Mucosa of descending colon (tissue), 3 donors: ENCODE measurements at regions of chr3 and their contacts with region 1.

Region 1: GRCh38 chr3:32667122-32667521 is 17.9 kb upstream of the CNOT10 start:
- DNase-seq: no peak
- ATAC-seq: peak; percentile 46
- H3K4me3 ChIP-seq: no peak overlapping the region
- H3K4me1 ChIP-seq: no peaks in the 10 kb centered on the region
- CTCF ChIP-seq: no peak

Region 2: DNA sequence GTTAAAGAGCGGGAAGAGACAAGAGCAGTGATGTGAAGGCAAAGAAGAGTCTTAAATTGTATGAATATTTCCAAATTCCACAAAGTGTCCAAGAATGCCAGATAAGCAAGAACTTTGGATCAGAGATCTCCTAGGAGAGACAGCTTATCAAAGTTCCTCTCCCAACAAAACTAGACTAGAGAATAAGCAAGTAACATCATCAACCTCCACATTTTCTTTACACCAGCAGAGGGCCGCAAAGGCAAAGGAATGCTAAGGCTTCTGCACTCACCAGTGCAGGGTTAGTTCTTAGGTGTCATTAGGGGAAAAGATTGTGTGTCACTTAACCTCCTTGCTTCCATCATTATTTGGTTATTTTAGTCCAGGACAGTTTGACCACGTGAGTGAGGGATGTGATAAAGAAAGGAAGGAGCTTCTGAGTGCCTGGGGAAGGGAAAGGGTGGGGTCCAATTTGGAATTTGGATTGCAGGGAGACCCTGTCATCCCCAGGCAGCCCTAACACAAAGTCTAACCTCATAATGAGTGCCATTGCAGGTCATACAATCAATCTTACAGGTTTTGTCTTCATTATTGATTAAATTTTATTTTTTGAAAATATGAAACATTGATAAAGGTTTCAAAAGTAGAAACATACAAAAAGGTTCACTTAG is 156.9 kb before region 1 on chr3:
- intact Hi-C with region 1: loop called (anchors 10 kb)
- DNase-seq: peak in 2 of 3 donors; percentile 44 to 85
- ATAC-seq: peak; percentile 86
- H3K4me3 ChIP-seq: no peak overlapping the region
- H3K4me1 ChIP-seq: no peaks in the 10 kb centered on the region
- CTCF ChIP-seq: peak; percentile 34

Region 3: DNA sequence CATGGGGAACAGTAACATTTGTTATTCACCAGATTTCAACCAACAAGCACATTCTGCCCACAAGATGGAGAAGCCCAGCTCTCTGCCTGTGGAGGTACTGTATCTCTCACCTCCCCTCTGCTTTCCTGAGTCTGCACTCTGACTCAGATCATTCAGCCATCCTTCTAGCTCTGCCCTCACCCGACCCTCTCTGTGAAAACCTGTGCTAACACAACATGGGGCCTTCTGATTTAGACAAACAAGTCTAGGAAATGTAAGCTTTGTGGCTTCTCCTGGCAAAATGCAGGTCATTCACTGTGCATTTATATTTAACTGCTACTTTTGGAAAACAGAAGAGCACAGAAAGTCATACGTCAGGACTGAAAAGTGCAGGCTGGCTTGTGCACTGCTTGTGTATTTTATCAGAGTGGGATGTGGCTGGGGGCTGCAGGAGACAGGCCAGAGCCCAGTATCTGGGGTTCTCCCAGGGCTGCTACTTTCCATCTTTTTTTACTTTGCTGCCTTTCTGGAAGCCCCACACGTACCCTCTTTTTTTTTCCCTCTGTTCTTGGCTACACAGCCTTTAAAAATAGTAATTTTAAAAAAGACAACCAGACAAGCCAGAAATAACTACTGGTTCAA is 500.7 kb after region 1 on chr3:
- intact Hi-C with region 1: no loop called
- DNase-seq: no peak
- ATAC-seq: no peak
- H3K4me3 ChIP-seq: no peak overlapping the region
- H3K4me1 ChIP-seq: no peaks in the 10 kb centered on the region
- CTCF ChIP-seq: no peak

Region 4: DNA sequence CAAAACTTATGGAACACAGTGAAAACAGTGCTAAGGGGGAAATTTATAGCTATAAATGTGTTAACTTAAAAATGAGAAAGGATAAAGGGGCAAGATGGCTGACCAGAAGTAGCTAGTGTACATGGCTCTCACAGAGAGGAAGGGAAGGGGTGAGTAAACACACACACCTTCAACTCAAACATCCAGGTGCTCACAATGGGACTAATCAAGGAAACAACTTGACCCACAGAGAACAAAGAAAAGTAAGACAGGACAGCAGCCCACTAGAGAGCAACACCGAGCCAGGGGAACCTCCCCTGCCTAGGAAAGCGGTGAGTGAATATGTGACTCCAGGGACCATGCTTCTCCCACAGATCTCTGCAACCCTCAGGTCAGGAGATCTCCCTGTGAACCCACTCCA is 858.1 kb after region 1 on chr3:
- intact Hi-C with region 1: no loop called
- DNase-seq: no peak
- ATAC-seq: peak; percentile 87
- H3K4me3 ChIP-seq: no peak overlapping the region
- H3K4me1 ChIP-seq: no peaks in the 10 kb centered on the region
- CTCF ChIP-seq: no peak